ENCODE measurements at regions of chr13 and their contacts with region 1.

Region 1: GRCh38 chr13:52450012-52450792 is at the start of gene VPS36:
- DNase-seq: peak; percentile 93
- H3K4me3 ChIP-seq: peak within 1 kb of the TSS; percentile 74 to 99 (median 98)
- H3K27ac ChIP-seq: peak within 1 kb of the TSS; percentile 94
- H3K4me1 ChIP-seq: peaks cover 27% of the 10 kb centered on the region
- H3K27me3 ChIP-seq: no peaks in the 10 kb centered on the region
- CTCF ChIP-seq: peak; percentile 95 to 100
- POLR2A ChIP-seq: peak; percentile 61
- total RNA-seq, gene VPS36: 30.4 and 32.3 TPM in 2 replicates

Region 2: DNA sequence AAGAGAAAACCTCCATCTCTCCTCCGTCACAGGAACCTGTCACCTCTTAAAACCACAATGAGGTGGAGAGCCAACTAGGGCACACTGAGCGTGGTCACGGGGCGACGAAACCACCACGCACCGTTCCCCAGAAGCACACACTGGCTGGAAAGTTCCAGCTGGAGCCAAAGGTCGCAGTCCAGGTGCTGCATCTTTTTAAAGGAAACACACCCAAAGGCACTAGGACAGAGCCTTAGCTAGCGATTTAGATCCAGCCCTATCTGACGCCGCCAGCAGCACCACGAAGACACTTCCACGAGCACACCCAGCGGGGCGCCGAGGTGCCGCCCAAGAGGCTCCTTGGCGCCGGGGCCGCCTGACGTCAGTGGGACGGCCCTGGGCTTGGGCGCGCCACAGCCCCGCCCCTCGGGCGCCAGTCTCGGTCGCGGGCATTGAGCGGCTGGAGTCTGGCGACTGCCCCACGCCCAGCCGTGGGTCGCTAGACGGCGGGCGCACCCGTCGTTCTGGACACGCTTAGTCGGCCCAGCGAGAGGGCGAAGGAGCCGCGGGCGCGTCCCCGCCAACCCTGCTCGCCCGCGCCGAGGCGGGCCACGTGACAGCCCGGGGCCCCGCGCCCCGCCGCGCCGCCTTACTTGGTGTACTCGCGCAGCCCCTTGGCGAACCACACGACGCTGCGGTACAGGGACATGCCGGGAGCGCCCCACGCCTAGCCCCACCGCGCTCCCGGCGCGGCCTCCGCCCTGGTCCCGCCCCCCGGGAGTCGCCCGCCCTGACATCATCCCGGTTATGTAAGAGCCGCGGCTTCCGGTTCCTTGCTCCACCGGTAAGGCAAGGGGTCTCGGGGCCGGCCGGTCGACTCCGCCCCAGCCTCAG is 646.5 kb before region 1 on chr13 and contains the start of gene DHRS12:
- CTCF ChIA-PET with region 1: no interaction called
- POLR2A ChIA-PET with region 1: no interaction called
- dilution Hi-C with region 1: no loop called
- intact Hi-C with region 1: loop called (anchors 10 kb)
- DNase-seq: peak; percentile 75
- H3K4me3 ChIP-seq: peak within 1 kb of the TSS; percentile 62 to 72 (median 71)
- H3K27ac ChIP-seq: peak within 1 kb of the TSS; percentile 92
- H3K4me1 ChIP-seq: peaks cover 35% of the 10 kb centered on the region
- H3K27me3 ChIP-seq: no peaks in the 10 kb centered on the region
- CTCF ChIP-seq: no peak
- POLR2A ChIP-seq: peak; percentile 77
- total RNA-seq, gene DHRS12: 6.4 and 8.9 TPM in 2 replicates

Region 3: DNA sequence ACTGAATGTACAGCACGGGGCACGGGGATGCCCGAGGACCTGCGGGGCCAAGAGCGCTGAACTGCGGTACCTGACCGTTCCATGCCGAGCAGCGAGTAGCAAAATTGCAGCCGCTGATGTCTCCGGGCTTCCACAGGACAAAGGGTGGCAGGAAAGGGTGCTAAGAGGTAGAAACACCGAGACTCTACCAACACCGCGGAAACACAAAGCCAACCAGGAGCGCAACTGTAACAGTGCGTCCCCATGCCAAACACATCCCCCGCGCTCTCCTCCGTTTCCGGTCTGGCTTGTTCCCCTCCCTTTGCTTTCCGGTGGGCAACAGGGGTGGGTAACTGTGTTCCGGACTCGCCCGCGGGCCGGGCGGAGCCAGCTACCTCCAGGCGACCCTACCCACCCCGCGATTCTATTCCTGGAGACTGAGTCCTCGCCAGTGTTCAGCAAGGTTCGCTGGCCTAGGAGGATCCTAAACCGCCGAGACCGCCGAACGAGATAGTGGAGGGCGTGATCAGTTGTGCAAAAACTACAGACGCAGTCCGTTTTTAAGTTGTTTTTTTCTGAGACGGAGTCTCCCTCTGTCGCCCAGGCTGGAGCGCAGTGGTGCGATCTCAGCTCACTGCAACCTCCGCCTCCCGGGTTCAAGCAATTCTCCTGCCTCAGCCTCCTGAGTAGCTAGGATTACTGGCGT is 255.9 kb before region 1 on chr13:
- CTCF ChIA-PET with region 1: interaction called, 15 read pairs
- POLR2A ChIA-PET with region 1: interaction called, 4 read pairs
- dilution Hi-C with region 1: no loop called
- intact Hi-C with region 1: loop called (anchors 2 kb)
- DNase-seq: peak; percentile 68
- H3K4me3 ChIP-seq: peak overlapping the region; percentile 37 to 88 (median 73)
- H3K27ac ChIP-seq: peak overlapping the region; percentile 43
- H3K4me1 ChIP-seq: peaks cover 9% of the 10 kb centered on the region
- H3K27me3 ChIP-seq: no peaks in the 10 kb centered on the region
- CTCF ChIP-seq: no peak
- POLR2A ChIP-seq: peak; percentile 91

Region 4: GRCh38 chr13:52383366-52383765 is 66.8 kb before region 1 on chr13:
- CTCF ChIA-PET with region 1: interaction called, 32 read pairs
- POLR2A ChIA-PET with region 1: no interaction called
- dilution Hi-C with region 1: no loop called
- intact Hi-C with region 1: no loop called
- DNase-seq: peak; percentile 7
- H3K4me3 ChIP-seq: no peak overlapping the region
- H3K27ac ChIP-seq: no peak overlapping the region
- H3K4me1 ChIP-seq: peaks cover 5% of the 10 kb centered on the region
- H3K27me3 ChIP-seq: no peaks in the 10 kb centered on the region
- CTCF ChIP-seq: no peak
- POLR2A ChIP-seq: no peak

Region 5: DNA sequence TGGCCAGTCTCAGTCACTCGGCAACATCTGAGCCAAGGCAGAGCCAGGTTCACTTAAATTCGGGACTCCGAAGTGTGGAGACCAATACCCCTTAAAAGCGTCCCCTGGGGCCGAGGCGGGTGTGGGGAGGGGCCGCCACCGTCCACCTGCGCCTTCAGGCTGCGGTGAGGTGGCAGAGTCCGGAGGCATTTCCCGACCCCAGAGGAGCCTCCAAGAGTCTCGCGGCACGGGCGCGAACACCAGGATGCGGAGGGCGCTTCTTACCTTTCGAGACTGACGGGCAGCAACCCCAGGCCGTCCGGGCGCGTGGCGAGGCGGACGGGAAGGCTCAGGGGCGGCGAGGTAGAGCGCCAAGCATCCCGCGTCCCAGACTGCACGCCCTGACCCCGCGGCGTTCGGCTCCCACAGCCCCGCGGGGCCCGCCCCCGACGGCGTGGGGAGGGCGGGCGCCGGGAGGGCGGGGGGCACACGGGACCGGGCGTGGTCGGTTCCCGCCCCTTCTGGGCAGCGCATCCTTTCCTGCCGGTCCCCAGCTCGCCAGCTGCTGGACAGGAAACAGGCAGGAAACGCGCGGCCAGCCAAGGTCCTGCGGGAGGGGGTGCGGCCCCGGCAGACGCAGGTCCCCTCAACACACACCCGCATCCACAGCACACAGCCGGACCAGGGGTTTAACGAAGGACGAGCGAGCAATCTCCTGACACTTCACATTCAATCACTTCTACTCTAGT is 44.3 kb before region 1 on chr13 and contains the start of gene THSD1:
- CTCF ChIA-PET with region 1: interaction called, 142 read pairs
- POLR2A ChIA-PET with region 1: interaction called, 16 read pairs
- dilution Hi-C with region 1: no loop called
- intact Hi-C with region 1: loop called (anchors 1 kb)
- DNase-seq: peak; percentile 71
- H3K4me3 ChIP-seq: peak within 1 kb of the TSS; percentile 71 to 99 (median 74)
- H3K27ac ChIP-seq: peak within 1 kb of the TSS; percentile 81
- H3K4me1 ChIP-seq: peaks cover 21% of the 10 kb centered on the region
- H3K27me3 ChIP-seq: no peaks in the 10 kb centered on the region
- CTCF ChIP-seq: no peak
- POLR2A ChIP-seq: peak; percentile 81
- total RNA-seq, gene THSD1: 25.2 and 25.4 TPM in 2 replicates

Region 6: DNA sequence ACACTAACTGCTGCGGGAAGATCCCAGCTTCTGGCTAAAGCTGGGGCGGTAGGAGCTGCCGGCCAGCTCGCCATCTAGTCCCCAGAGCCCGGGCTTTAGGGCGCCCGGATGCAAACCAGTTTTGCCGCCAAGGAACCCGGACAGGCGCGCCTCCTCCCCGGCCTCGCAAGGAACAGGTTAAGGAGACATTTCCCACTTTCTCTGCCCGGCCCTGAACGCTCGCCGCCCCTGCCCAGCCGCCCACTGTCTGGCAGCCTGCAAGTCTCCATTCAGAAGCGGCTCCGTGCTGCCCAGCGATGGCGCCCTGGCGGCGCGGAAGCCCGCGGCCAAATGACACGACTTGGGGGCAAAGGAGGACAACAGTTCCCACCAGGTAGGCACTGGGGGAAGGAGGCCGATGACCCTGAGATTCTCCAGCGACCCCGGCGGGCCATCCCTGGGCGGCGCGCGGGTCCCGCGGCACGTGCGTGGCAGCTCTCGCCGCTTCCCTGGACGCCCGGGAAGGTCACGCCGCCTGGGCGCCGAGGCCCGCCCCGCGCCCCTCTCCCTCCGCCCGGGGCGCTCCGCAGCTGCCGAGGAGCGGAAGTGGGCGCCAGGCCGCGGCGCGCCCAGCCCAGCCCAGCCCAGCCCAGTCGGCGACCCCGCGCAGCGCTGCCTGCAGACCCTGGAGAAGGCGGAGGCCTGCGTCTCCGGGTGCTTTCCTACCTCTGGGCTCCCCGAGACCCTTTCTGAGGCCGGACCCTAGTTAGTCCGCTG is 149.8 kb after region 1 on chr13:
- CTCF ChIA-PET with region 1: no interaction called
- POLR2A ChIA-PET with region 1: no interaction called
- dilution Hi-C with region 1: no loop called
- intact Hi-C with region 1: loop called (anchors 2 kb)
- DNase-seq: peak; percentile 40
- H3K4me3 ChIP-seq: peak overlapping the region; percentile 54 to 81 (median 68)
- H3K27ac ChIP-seq: peak overlapping the region; percentile 93
- H3K4me1 ChIP-seq: peaks cover 23% of the 10 kb centered on the region
- H3K27me3 ChIP-seq: no peaks in the 10 kb centered on the region
- CTCF ChIP-seq: no peak
- POLR2A ChIP-seq: peak; percentile 39

Region 7: DNA sequence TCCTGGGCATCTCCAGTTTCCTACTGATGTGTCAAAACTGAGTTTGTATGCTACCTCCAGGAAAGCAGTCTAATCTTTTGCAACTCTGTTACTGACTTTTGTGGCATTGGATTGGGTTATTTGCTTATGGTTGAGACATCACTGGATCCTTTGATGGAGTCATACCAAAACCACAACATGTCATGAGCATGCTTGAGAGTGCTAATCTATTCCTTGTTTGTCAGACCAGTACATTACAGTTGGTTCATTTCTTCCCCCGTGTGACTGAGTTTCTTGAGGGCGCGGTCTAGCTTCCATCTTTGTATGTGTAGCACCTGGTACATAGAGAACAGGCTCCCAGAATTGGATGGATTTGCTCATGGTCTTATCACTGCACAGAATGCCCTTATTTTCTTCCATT is 245.7 kb after region 1 on chr13:
- CTCF ChIA-PET with region 1: no interaction called
- POLR2A ChIA-PET with region 1: no interaction called
- dilution Hi-C with region 1: no loop called
- intact Hi-C with region 1: no loop called
- DNase-seq: no peak
- H3K4me3 ChIP-seq: no peak overlapping the region
- H3K27ac ChIP-seq: no peak overlapping the region
- H3K4me1 ChIP-seq: no peaks in the 10 kb centered on the region
- H3K27me3 ChIP-seq: no peaks in the 10 kb centered on the region
- CTCF ChIP-seq: no peak
- POLR2A ChIP-seq: no peak

Measured in endothelial cell of umbilical vein (primary cell).